K562 (cell line): ENCODE measurements at regions of chr6 and their contacts with region 1.

Region 1: GRCh38 chr6:10800829-10801535 is 37.4 kb downstream of the MAK start:
- DNase-seq: peak; percentile 82 to 85 (median 84)
- ATAC-seq: peak; percentile 99
- H3K4me3 ChIP-seq: no peak overlapping the region
- H3K27ac ChIP-seq: no peak overlapping the region
- H3K4me1 ChIP-seq: no peaks in the 10 kb centered on the region; a peak in 1 of 5 replicates
- H3K27me3 ChIP-seq: no peaks in the 10 kb centered on the region
- CTCF ChIP-seq: peak; percentile 94 to 98 (median 97)
- EP300 ChIP-seq: no peak
- POLR2A ChIP-seq: no peak
- RAD21 ChIP-seq: peak; percentile 97 to 99

Region 2: DNA sequence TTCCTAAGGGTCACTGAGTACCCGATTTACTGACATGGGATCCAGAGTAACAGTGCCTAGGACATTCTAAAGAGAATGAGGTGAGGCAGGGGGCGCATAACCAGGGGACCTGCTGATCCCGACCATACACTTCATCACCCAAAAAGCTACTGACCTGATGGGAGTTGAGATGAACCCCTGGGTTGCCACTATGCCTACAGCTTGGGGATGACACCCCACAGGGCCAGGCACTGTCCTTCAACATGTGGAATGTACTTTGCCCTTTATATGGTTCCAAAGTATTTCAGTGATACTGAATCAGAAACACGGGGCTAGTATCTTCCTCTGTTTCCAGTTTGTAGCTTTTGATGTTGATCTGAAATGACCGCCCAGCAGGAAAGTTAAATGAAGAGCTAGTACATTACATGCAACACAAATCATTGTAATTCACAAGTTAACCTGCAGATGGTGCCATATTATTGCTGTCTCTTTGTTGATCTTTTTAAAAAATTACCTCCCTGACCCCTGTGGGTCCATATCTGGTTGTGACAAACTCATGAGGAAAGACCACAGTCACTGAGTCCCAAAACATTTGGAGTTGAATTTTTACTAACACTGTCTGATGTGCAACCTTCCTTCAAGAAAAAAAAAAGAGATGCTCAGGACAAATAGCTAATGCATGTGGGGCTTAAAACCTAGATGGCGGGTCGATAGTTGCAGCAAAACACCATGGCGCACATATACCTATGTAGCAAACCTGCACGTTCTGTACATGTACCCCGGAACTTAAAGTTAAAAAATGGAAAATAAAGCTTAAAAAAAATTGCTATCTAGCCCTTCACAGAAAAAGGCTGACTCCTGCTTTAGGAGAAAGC is 322.6 kb before region 1 on chr6:
- CTCF ChIA-PET with region 1: interaction called, 17 read pairs
- POLR2A ChIA-PET with region 1: no interaction called
- in situ Hi-C with region 1: loop called (anchors 5 kb)
- intact Hi-C with region 1: loop called (anchors 1 kb)
- DNase-seq: peak; percentile 59 to 79 (median 68)
- ATAC-seq: peak; percentile 88
- H3K4me3 ChIP-seq: no peak overlapping the region
- H3K27ac ChIP-seq: no peak overlapping the region
- H3K4me1 ChIP-seq: peaks cover 0 to 6% of the 10 kb centered on the region in 2 experiments; a peak in 1 of 5 replicates
- H3K27me3 ChIP-seq: peaks cover 0 to 15% of the 10 kb centered on the region in 2 experiments; a peak in 2 of 5 replicates
- CTCF ChIP-seq: peak; percentile 57 to 86 (median 71); a peak in 5 of 6 replicates
- EP300 ChIP-seq: no peak
- POLR2A ChIP-seq: no peak
- RAD21 ChIP-seq: peak; percentile 82 to 92

Region 3: GRCh38 chr6:10510592-10511367 is 290.2 kb before region 1 on chr6:
- CTCF ChIA-PET with region 1: interaction called, 28 read pairs
- POLR2A ChIA-PET with region 1: no interaction called
- in situ Hi-C with region 1: no loop called
- intact Hi-C with region 1: loop called (anchors 1 kb)
- DNase-seq: peak; percentile 43 to 78 (median 62)
- ATAC-seq: peak; percentile 98
- H3K4me3 ChIP-seq: no peak overlapping the region
- H3K27ac ChIP-seq: no peak overlapping the region
- H3K4me1 ChIP-seq: peaks cover 0 to 6% of the 10 kb centered on the region in 2 experiments; a peak in 2 of 5 replicates
- H3K27me3 ChIP-seq: peaks cover 0 to 4% of the 10 kb centered on the region in 2 experiments; a peak in 1 of 5 replicates
- CTCF ChIP-seq: peak; percentile 88 to 96 (median 95)
- EP300 ChIP-seq: 0 out of 2 replicates have a peak, but pooled peaks have one; percentile 4
- POLR2A ChIP-seq: no peak
- RAD21 ChIP-seq: peak; percentile 80 to 90

Region 4: GRCh38 chr6:10621213-10621612 is 179.8 kb before region 1 on chr6:
- CTCF ChIA-PET with region 1: no interaction called
- POLR2A ChIA-PET with region 1: no interaction called
- in situ Hi-C with region 1: no loop called
- intact Hi-C with region 1: loop called (anchors 5 kb)
- DNase-seq: peak in 1 of 4 experiments; percentile 20
- ATAC-seq: peak; percentile 55; the same call in 2 of the 3 replicates
- H3K4me3 ChIP-seq: no peak overlapping the region
- H3K27ac ChIP-seq: no peak overlapping the region
- H3K4me1 ChIP-seq: no peaks in the 10 kb centered on the region
- H3K27me3 ChIP-seq: 0 out of 5 replicates have a peak, but pooled peaks cover 0 to 4% of the 10 kb centered on the region in 2 experiments
- CTCF ChIP-seq: no peak; a peak in 1 of 6 replicates
- EP300 ChIP-seq: no peak
- POLR2A ChIP-seq: no peak
- RAD21 ChIP-seq: peak; percentile 13 to 51; a peak in 2 of 4 replicates

Region 5: DNA sequence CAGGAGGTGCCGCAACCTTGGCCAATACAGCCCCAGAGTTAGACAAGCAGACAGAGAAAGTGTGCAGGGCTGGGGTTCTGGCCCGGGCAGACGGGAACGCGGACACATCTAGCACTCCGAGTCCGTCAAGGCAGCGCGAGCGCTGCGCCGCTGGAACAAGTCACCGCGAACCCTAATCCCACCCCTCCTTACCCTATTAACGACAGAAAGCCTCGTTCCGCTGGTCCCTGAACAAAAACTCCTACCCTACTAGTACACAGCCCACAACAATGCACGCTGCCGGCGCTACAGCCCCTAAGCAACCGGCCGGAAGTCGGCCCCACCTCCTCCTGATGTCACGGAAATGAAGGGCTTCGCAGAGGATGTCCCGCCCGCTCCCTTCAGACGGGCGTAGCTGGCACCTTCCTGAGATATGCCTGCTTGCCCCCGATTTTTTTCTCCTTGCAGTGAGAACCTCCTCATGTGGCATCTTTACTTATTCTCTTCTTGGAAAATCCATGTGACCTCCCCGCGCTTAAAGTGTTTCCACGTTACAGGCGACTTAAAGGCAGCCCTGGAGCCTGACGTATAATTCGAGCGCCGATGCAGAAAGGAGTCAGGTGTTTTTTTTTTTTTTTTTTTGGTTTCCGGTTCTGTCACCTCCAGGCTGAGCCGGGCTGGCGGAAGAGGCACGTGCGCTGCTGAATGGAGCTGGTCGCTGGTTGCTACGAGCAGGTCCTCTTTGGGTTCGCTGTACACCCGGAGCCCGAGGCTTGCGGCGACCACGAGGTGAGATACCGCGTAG is 106.5 kb before region 1 on chr6 and contains the starts of genes C6orf52 and PAK1IP1:
- CTCF ChIA-PET with region 1: no interaction called
- POLR2A ChIA-PET with region 1: no interaction called
- in situ Hi-C with region 1: no loop called
- intact Hi-C with region 1: loop called (anchors 5 kb)
- DNase-seq: peak; percentile 94 to 97 (median 94)
- ATAC-seq: peak; percentile 98
- H3K4me3 ChIP-seq: peak within 1 kb of the TSS; percentile 55
- H3K27ac ChIP-seq: peak within 1 kb of the TSS; percentile 84
- H3K4me1 ChIP-seq: peaks cover 5 to 13% of the 10 kb centered on the region in 2 experiments; a peak in 4 of 5 replicates
- H3K27me3 ChIP-seq: no peaks in the 10 kb centered on the region
- CTCF ChIP-seq: 0 out of 6 replicates have a peak, but pooled peaks of 1 of the 3 experiments have one; percentile 1
- EP300 ChIP-seq: no peak; the same call in none of the 2 replicates
- POLR2A ChIP-seq: peak; percentile 98
- RAD21 ChIP-seq: peak; percentile 34 to 38; a peak in 3 of 4 replicates
- polyA plus RNA-seq, gene C6orf52: 27.6 to 37.0 TPM
- polyA plus RNA-seq, gene PAK1IP1: 189 to 200 TPM

Region 6: DNA sequence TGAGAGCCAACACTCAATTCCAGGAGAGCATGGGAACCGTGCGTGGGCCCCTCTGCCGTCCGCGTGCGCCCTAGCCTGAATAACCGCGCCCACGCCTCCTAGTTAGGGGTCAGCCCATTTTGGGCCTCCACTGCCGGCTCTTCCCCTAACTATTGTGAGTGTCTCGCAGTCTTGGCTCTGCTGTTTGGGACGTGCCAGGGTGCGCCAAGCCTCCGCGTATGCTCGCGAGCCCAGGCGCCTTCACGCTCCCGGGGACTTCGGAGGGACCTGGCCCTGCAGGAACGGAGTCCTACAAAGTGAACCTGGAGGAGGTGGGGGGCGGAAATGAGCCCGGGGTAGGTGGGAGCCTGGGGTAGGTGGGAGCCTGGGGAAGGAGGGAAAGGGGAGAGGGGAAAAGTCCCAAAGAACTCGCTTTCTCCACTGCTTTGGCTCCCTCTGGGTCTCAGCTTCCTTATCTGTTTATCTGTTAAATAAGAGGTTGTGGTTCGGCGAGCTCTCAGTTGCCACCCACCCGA is 81.7 kb after region 1 on chr6:
- CTCF ChIA-PET with region 1: no interaction called
- POLR2A ChIA-PET with region 1: no interaction called
- in situ Hi-C with region 1: no loop called
- intact Hi-C with region 1: no loop called
- DNase-seq: no peak
- ATAC-seq: no peak
- H3K4me3 ChIP-seq: no peak overlapping the region
- H3K27ac ChIP-seq: no peak overlapping the region
- H3K4me1 ChIP-seq: peaks cover 0 to 9% of the 10 kb centered on the region in 2 experiments; a peak in 2 of 5 replicates
- H3K27me3 ChIP-seq: no peaks in the 10 kb centered on the region
- CTCF ChIP-seq: no peak
- EP300 ChIP-seq: no peak
- POLR2A ChIP-seq: no peak
- RAD21 ChIP-seq: no peak